CD4-positive, alpha-beta T cell (primary cell): ENCODE measurements at regions of chr2 and their contacts with region 1.

Region 1: DNA sequence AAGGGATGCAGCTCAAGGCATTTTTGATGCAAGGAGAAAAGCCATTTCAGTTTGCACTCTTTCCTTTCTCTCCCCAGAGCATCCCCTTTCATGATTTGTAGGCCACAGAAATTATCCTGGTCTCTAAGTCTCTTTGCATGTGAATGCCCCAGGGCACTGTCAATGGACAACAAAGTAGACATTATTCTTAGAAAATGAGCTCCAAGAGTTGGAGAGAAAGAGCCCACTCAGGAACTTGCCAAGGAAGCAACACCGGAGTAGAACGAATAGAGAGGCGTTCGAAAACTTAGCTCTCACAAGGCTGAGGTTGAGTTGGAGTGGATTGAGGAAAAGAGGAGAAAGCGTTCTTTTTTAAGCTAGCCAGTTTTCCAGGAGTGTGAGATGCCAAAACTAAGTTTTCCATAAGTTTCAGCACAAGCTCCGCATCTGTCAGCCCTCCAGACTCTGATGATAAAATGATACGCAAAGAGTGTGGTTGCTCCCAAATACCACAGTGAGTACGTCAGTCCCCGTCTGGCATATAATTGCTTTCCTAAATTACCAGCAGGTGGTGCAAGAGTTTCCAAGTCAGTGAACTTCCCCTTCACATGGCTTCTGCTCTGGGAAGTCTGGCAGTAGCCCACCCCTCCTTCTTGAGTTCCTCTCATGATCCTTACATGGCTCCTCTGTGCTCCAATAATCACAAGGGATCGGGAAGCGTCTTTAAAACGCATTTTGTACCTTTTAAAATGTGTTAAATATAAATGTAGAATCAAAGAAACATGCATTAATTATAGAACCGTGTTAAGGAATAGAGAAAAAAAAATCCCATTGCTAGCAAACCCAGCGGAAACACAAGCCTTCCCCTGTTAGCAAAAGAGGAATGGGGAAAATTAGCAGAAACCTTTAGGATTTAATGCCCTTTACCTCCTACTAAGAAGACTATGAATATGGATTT is 1060.6 kb upstream of the FANCL start:
- DNase-seq: peak in 4 of 14 experiments; percentile 13 to 62 (median 42)
- ATAC-seq: peak; percentile 49
- H3K4me3 ChIP-seq: no peak overlapping the region
- H3K4me3 Mint-ChIP-seq: no peak overlapping the region
- H3K27ac ChIP-seq: no peak overlapping the region
- H3K27ac Mint-ChIP-seq: no peak overlapping the region
- H3K4me1 ChIP-seq: no peaks in the 10 kb centered on the region
- H3K4me1 Mint-ChIP-seq: no peaks in the 10 kb centered on the region
- H3K27me3 ChIP-seq: no peaks in the 10 kb centered on the region
- H3K27me3 Mint-ChIP-seq: no peaks in the 10 kb centered on the region
- CTCF ChIP-seq: no peak

Region 2: DNA sequence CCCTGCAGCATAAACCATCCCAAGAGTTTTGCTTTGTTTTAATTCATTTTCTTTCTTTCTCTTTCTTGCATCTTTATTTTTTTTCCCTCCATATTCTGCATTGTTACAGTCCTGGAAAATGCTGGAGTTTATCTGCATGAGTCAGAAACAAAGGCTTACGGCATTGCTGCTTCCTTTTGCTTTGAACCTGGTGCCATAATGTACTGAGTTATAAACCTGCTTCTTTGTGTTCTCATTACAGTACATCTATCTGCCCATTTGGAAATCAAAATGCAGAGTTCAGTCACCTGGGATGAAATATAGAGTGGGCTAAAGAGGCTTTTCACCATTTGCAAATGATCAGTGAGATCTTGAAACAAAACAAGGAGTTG is 51.4 kb before region 1 on chr2:
- CTCF ChIA-PET with region 1: no interaction called
- POLR2A ChIA-PET with region 1: no interaction called
- intact Hi-C with region 1: no loop called
- DNase-seq: no peak
- ATAC-seq: no peak
- H3K4me3 ChIP-seq: no peak overlapping the region
- H3K4me3 Mint-ChIP-seq: no peak overlapping the region
- H3K27ac ChIP-seq: no peak overlapping the region
- H3K27ac Mint-ChIP-seq: no peak overlapping the region
- H3K4me1 ChIP-seq: no peaks in the 10 kb centered on the region
- H3K4me1 Mint-ChIP-seq: no peaks in the 10 kb centered on the region
- H3K27me3 ChIP-seq: no peaks in the 10 kb centered on the region
- H3K27me3 Mint-ChIP-seq: no peaks in the 10 kb centered on the region
- CTCF ChIP-seq: no peak

Region 3: DNA sequence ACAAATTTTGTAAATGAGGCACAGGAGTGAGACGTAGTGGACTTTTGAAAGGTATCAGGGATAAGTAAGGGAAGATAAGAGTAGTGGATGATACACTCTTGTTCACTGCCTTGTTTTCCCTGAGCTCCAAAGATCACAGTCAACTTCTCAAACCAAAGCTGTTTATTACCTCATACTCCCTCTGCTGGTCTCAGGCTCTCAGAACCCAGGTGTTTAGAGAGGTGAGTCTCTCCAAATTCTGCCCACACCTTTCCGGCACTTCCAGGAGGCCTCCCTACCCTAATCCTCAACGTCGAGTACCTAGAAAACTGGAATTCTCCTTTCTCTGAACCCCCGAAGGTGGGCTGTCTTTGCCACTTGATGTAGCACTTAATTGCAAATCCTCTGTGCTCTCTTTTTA is 630.6 kb after region 1 on chr2:
- CTCF ChIA-PET with region 1: no interaction called
- POLR2A ChIA-PET with region 1: no interaction called
- intact Hi-C with region 1: loop called in 1 of 2 experiments (anchors 10 kb)
- DNase-seq: no peak
- ATAC-seq: no peak
- H3K4me3 ChIP-seq: no peak overlapping the region
- H3K4me3 Mint-ChIP-seq: no peak overlapping the region
- H3K27ac ChIP-seq: no peak overlapping the region
- H3K27ac Mint-ChIP-seq: no peak overlapping the region
- H3K4me1 ChIP-seq: no peaks in the 10 kb centered on the region
- H3K4me1 Mint-ChIP-seq: peaks cover 9% of the 10 kb centered on the region
- H3K27me3 ChIP-seq: no peaks in the 10 kb centered on the region
- H3K27me3 Mint-ChIP-seq: no peaks in the 10 kb centered on the region
- CTCF ChIP-seq: no peak

Region 4: GRCh38 chr2:60152226-60152833 is 850.6 kb after region 1 on chr2:
- CTCF ChIA-PET with region 1: no interaction called
- POLR2A ChIA-PET with region 1: no interaction called
- intact Hi-C with region 1: loop called (anchors 5 kb)
- DNase-seq: peak in 3 of 14 experiments; percentile 16 to 52 (median 28)
- ATAC-seq: no peak
- H3K4me3 ChIP-seq: no peak overlapping the region
- H3K4me3 Mint-ChIP-seq: no peak overlapping the region
- H3K27ac ChIP-seq: no peak overlapping the region
- H3K27ac Mint-ChIP-seq: no peak overlapping the region
- H3K4me1 ChIP-seq: no peaks in the 10 kb centered on the region
- H3K4me1 Mint-ChIP-seq: peaks cover 5% of the 10 kb centered on the region
- H3K27me3 ChIP-seq: no peaks in the 10 kb centered on the region
- H3K27me3 Mint-ChIP-seq: no peaks in the 10 kb centered on the region
- CTCF ChIP-seq: peak; percentile 65

Region 5: GRCh38 chr2:60550178-60550983 is 1248.6 kb after region 1 on chr2:
- CTCF ChIA-PET with region 1: no interaction called
- POLR2A ChIA-PET with region 1: no interaction called
- intact Hi-C with region 1: loop called in 1 of 2 experiments (anchors 10 kb)
- DNase-seq: peak in 8 of 14 experiments; percentile 23 to 76 (median 50)
- ATAC-seq: peak; percentile 62
- H3K4me3 ChIP-seq: peak overlapping the region; percentile 62
- H3K4me3 Mint-ChIP-seq: peak overlapping the region; percentile 96
- H3K27ac ChIP-seq: peak overlapping the region in 1 of 2 donors; percentile 53
- H3K27ac Mint-ChIP-seq: peak overlapping the region; percentile 86
- H3K4me1 ChIP-seq: peaks cover 61% of the 10 kb centered on the region
- H3K4me1 Mint-ChIP-seq: peaks cover 45% of the 10 kb centered on the region
- H3K27me3 ChIP-seq: peaks cover 58 to 83% of the 10 kb centered on the region in 2 experiments
- H3K27me3 Mint-ChIP-seq: peaks cover 78% of the 10 kb centered on the region
- CTCF ChIP-seq: peak; percentile 21

Region 6: GRCh38 chr2:60560734-60561644 is 1259.3 kb after region 1 on chr2:
- CTCF ChIA-PET with region 1: no interaction called
- POLR2A ChIA-PET with region 1: no interaction called
- intact Hi-C with region 1: loop called (anchors 5 to 10 kb)
- DNase-seq: peak in 3 of 14 experiments; percentile 38 to 59 (median 53)
- ATAC-seq: peak; percentile 58
- H3K4me3 ChIP-seq: no peak overlapping the region
- H3K4me3 Mint-ChIP-seq: no peak overlapping the region
- H3K27ac ChIP-seq: no peak overlapping the region
- H3K27ac Mint-ChIP-seq: no peak overlapping the region
- H3K4me1 ChIP-seq: peaks cover 13% of the 10 kb centered on the region
- H3K4me1 Mint-ChIP-seq: peaks cover 17% of the 10 kb centered on the region
- H3K27me3 ChIP-seq: peaks cover 20 to 58% of the 10 kb centered on the region in 2 experiments
- H3K27me3 Mint-ChIP-seq: peaks cover 73% of the 10 kb centered on the region
- CTCF ChIP-seq: peak; percentile 58

Region 7: DNA sequence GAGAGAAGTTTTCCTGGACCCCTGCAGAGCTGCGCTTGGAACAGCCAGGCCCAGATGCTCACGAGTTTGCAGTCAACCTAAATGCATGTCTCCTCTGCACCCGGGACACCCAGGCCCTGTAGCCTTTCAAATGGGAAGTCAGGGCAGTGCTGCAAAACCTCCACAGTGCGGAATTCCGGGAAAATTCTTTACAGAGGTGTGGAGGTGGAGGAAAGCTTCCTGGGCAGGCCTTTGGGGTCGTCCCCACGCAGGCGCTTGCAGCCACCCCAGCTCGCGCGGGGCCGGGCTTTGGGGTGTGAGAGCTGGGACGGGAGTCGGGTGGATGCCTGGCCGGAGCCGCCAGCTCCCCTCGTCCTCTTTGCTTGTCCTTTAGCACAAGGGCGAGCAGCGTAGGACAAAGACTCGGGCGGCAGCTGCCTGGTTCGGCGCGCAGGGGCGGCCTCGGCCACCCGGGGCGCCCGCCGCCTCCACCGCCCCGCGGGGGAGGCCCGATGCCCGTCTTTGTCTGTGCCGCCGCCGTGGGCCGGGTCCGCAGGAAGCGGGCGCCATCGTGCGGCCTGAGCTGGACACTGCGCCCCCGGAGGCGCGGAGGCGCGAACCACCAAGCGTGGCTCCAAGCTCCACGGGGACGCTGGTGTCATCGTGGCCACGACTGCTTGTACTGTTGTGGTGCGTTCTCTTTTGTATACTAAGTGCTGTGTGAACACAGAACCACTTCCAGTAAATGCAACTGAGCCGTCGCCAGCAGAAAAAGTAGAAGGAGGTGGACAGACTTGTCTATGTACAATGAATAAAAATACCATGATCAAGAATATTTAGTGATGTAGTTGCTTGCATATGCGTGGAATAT is 1279.9 kb after region 1 on chr2:
- CTCF ChIA-PET with region 1: no interaction called
- POLR2A ChIA-PET with region 1: no interaction called
- intact Hi-C with region 1: loop called in 1 of 2 experiments (anchors 2 kb)
- DNase-seq: peak; percentile 19 to 80 (median 46)
- ATAC-seq: peak; percentile 92
- H3K4me3 ChIP-seq: no peak overlapping the region
- H3K4me3 Mint-ChIP-seq: no peak overlapping the region
- H3K27ac ChIP-seq: no peak overlapping the region
- H3K27ac Mint-ChIP-seq: no peak overlapping the region
- H3K4me1 ChIP-seq: peaks cover 9% of the 10 kb centered on the region
- H3K4me1 Mint-ChIP-seq: no peaks in the 10 kb centered on the region
- H3K27me3 ChIP-seq: peaks cover 22 to 27% of the 10 kb centered on the region in 2 experiments
- H3K27me3 Mint-ChIP-seq: peaks cover 50% of the 10 kb centered on the region
- CTCF ChIP-seq: peak; percentile 83